Activated CD4-positive, alpha-beta T cell treated with anti-CD3 and anti-CD28 coated beads for 36 hours (primary cell): ENCODE measurements at regions of chr12 and their contacts with region 1.

Region 1: DNA sequence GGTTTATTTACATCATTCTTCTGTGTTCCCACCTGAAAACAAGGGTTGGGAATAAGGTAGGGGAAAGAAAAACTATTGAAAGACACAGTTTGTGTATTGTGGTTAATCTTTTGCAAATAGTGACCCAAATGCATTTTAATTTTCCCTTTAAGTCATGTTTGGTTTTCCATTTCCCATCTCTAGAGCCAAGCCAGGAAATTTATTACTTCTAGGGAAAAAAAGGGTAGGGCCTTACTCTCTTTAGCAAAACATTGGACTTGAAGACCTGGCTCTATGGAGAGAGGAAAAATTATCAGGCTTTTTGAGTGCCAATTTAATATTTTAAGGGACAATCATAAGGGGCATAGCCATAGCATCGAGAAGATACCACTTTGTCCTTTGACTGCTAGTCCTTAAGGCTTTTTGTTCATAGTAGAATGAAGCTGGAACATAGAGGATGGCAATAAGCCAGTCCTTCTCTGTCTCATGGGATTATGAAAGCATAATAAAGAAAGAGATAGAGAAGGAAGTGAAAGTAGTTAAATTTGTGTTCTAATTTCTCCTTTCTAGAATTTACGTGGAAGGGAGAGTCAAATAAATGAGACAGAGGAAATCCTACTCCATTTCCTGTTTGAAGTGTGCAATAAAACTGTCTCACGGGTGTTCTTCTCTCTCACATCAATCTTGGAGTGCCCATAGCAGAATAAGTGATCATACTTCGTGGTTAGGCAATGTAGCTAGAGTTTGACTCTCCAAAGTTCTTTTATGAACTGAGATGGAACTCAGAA is 50.9 kb upstream of the PPFIA2 start:
- DNase-seq: no peak
- ATAC-seq: peak; percentile 85
- H3K4me3 Mint-ChIP-seq: no peak overlapping the region
- H3K27ac Mint-ChIP-seq: no peak overlapping the region
- H3K4me1 Mint-ChIP-seq: peaks cover 19% of the 10 kb centered on the region
- H3K27me3 Mint-ChIP-seq: peaks cover 20% of the 10 kb centered on the region

Region 2: DNA sequence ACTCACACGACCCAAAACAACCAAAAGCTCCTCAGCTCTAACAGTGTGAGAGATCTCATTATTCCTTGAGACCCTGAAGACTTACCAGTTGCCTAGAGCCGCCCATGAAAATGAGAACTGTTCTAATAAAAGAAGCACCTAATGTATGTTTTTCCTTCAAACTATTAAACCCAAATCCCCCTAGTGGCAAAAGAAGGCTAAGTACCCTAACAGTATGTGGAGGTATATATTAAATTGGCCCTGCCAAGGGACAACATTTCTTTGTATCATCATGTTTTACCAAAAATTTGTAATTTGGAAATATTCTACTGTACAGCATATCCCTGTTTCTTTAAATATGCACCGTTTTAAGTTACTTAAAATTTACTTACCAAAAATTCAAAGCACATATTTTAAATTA is 12.9 kb before region 1 on chr12:
- CTCF ChIA-PET with region 1: no interaction called
- POLR2A ChIA-PET with region 1: no interaction called
- intact Hi-C with region 1: loop called in 1 of 2 experiments (anchors 1 kb)
- DNase-seq: no peak
- ATAC-seq: no peak
- H3K4me3 Mint-ChIP-seq: no peak overlapping the region
- H3K27ac Mint-ChIP-seq: no peak overlapping the region
- H3K4me1 Mint-ChIP-seq: peaks cover 15% of the 10 kb centered on the region
- H3K27me3 Mint-ChIP-seq: peaks cover 19% of the 10 kb centered on the region

Region 3: GRCh38 chr12:82383930-82384552 is 574.0 kb after region 1 on chr12:
- CTCF ChIA-PET with region 1: no interaction called
- POLR2A ChIA-PET with region 1: no interaction called
- intact Hi-C with region 1: no loop called
- DNase-seq: no peak
- ATAC-seq: no peak
- H3K4me3 Mint-ChIP-seq: no peak overlapping the region
- H3K27ac Mint-ChIP-seq: no peak overlapping the region
- H3K4me1 Mint-ChIP-seq: no peaks in the 10 kb centered on the region
- H3K27me3 Mint-ChIP-seq: no peaks in the 10 kb centered on the region